H1 (cell line): ENCODE measurements at regions of chr1 and their contacts with region 1.

Region 1: DNA sequence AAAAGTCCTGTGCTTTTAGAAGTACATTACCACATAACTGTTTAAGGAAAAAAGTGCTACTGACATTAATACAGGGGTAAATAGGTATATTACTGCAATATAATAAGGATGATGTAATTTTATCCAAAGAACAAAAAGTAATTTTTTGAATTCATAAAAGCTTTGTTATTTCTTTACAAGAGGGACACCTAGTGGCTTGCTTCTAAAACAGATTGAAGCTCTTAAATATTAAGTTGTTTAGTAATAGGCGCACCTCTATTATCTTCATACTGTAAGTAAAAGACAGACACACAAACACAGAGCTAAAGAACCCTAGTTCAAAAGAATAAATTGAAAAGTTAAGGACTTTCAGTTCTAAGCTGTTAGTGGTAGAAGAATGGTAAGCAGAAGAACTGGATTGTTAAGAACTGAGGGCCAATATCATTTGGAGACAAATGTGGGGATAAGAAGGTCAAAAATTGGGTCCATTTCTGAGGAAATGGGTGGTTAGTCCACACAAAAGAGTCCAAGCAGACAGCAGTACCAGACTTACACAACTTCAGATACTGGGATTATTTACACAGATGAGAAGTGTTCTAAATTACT is 15.4 kb downstream of the ZNHIT6 start:
- DNase-seq: no peak
- H3K4me3 ChIP-seq: no peak overlapping the region
- H3K27ac ChIP-seq: no peak overlapping the region
- H3K4me1 ChIP-seq: no peaks in the 10 kb centered on the region
- H3K27me3 ChIP-seq: no peaks in the 10 kb centered on the region
- CTCF ChIP-seq: peak in 2 of 3 experiments; percentile 6 to 22; a peak in 2 of 4 replicates
- EP300 ChIP-seq: no peak
- POLR2A ChIP-seq: no peak
- RAD21 ChIP-seq: peak in 1 of 2 experiments; percentile 45; a peak in 3 of 4 replicates

Region 2: DNA sequence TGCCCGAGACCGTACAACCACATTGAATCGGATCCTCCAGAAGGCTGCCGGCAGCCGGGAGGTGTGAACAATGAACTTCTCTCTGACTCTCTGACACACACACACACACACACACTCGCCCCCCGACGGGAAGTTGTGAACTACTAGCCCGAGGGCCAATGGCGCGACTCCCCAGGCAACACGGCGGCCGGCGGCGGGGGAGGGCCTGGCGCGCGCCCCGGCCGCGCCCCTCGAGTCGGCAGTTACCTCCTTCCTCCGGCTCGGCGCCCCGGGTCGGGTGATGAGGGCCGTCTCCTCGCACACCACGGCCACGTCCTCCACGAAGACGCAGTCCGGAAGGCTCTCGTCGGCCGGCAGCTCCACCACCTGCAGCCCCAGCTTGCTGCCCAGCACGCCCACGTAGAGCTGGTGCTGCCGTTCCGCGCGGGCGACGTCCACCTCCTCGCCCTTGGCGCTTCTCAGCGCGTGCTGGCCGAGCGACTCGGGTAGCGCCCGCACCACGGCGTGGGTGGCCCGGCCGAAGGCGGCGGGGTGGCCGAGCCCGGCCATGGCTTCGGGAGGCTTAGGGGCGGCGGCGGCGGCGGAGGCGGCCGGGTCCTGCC is 228.2 kb before region 1 on chr1:
- CTCF ChIA-PET with region 1: interaction called, 13 read pairs
- POLR2A ChIA-PET with region 1: no interaction called
- DNase-seq: peak; percentile 34 to 83
- H3K4me3 ChIP-seq: peak overlapping the region; percentile 62 to 87 (median 62)
- H3K27ac ChIP-seq: no peak overlapping the region
- H3K4me1 ChIP-seq: peaks cover 0 to 10% (median 3%) of the 10 kb centered on the region in 4 experiments; a peak in 6 of 7 replicates
- H3K27me3 ChIP-seq: peaks cover 0 to 23% (median 16%) of the 10 kb centered on the region in 4 experiments; a peak in 6 of 7 replicates
- CTCF ChIP-seq: no peak
- EP300 ChIP-seq: no peak
- POLR2A ChIP-seq: no peak; a peak in 1 of 3 replicates
- RAD21 ChIP-seq: no peak

Region 3: GRCh38 chr1:85569122-85569521 is 123.7 kb before region 1 on chr1:
- CTCF ChIA-PET with region 1: interaction called, 10 read pairs
- POLR2A ChIA-PET with region 1: no interaction called
- DNase-seq: no peak
- H3K4me3 ChIP-seq: no peak overlapping the region
- H3K27ac ChIP-seq: no peak overlapping the region
- H3K4me1 ChIP-seq: no peaks in the 10 kb centered on the region
- H3K27me3 ChIP-seq: peaks cover 0 to 1% (median 0%) of the 10 kb centered on the region in 4 experiments; a peak in 1 of 7 replicates
- CTCF ChIP-seq: no peak
- EP300 ChIP-seq: no peak
- POLR2A ChIP-seq: no peak
- RAD21 ChIP-seq: no peak

Region 4: DNA sequence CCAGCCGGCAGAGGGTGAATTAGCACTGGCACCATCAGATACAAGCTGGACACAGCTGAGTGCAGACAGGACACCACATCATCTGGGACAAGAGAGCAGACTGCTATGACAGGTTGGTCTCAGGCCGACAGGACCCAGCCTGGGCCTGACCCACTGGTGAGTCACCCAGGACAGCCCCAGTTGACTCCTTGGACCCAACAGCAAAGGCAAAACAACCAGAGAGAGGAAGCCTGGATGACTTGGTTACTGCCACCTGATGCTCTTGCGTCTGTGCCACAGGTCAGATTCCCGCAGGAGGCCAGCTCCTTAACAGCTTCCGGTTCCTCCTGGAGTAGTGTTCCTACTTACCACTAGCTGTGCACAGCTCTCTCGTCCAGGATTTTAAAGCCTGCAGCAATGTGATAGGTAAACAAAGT is 93.7 kb before region 1 on chr1:
- CTCF ChIA-PET with region 1: interaction called, 10 read pairs
- POLR2A ChIA-PET with region 1: no interaction called
- DNase-seq: no peak
- H3K4me3 ChIP-seq: no peak overlapping the region
- H3K27ac ChIP-seq: no peak overlapping the region
- H3K4me1 ChIP-seq: peaks cover 2 to 11% (median 6%) of the 10 kb centered on the region in 4 experiments; a peak in 4 of 7 replicates
- H3K27me3 ChIP-seq: peaks cover 0 to 4% (median 1%) of the 10 kb centered on the region in 4 experiments; a peak in 2 of 7 replicates
- CTCF ChIP-seq: no peak
- EP300 ChIP-seq: no peak
- POLR2A ChIP-seq: no peak
- RAD21 ChIP-seq: no peak

Region 5: GRCh38 chr1:85612704-85613361 is 80.0 kb before region 1 on chr1:
- CTCF ChIA-PET with region 1: interaction called, 10 read pairs
- POLR2A ChIA-PET with region 1: no interaction called
- DNase-seq: no peak
- H3K4me3 ChIP-seq: no peak overlapping the region
- H3K27ac ChIP-seq: no peak overlapping the region
- H3K4me1 ChIP-seq: peaks cover under 1 to 10% (median 7%) of the 10 kb centered on the region in 4 experiments; a peak in 5 of 7 replicates
- H3K27me3 ChIP-seq: no peaks in the 10 kb centered on the region; a peak in 1 of 7 replicates
- CTCF ChIP-seq: peak; percentile 21 to 67 (median 62)
- EP300 ChIP-seq: no peak
- POLR2A ChIP-seq: no peak
- RAD21 ChIP-seq: peak; percentile 76 to 84

Region 6: GRCh38 chr1:85649591-85649990 is 43.2 kb before region 1 on chr1:
- CTCF ChIA-PET with region 1: no interaction called
- POLR2A ChIA-PET with region 1: no interaction called
- DNase-seq: no peak
- H3K4me3 ChIP-seq: no peak overlapping the region
- H3K27ac ChIP-seq: no peak overlapping the region
- H3K4me1 ChIP-seq: peaks cover 0 to 6% (median 4%) of the 10 kb centered on the region in 4 experiments; a peak in 2 of 7 replicates
- H3K27me3 ChIP-seq: no peaks in the 10 kb centered on the region
- CTCF ChIP-seq: no peak
- EP300 ChIP-seq: no peak
- POLR2A ChIP-seq: no peak
- RAD21 ChIP-seq: no peak

Region 7: GRCh38 chr1:85756864-85757263 is 64.0 kb after region 1 on chr1:
- CTCF ChIA-PET with region 1: no interaction called
- POLR2A ChIA-PET with region 1: no interaction called
- DNase-seq: no peak
- H3K4me3 ChIP-seq: no peak overlapping the region
- H3K27ac ChIP-seq: no peak overlapping the region
- H3K4me1 ChIP-seq: no peaks in the 10 kb centered on the region
- H3K27me3 ChIP-seq: no peaks in the 10 kb centered on the region
- CTCF ChIP-seq: no peak
- EP300 ChIP-seq: no peak
- POLR2A ChIP-seq: no peak
- RAD21 ChIP-seq: no peak